ENCODE measurements at regions of chr11 and their contacts with region 1.

Region 1: DNA sequence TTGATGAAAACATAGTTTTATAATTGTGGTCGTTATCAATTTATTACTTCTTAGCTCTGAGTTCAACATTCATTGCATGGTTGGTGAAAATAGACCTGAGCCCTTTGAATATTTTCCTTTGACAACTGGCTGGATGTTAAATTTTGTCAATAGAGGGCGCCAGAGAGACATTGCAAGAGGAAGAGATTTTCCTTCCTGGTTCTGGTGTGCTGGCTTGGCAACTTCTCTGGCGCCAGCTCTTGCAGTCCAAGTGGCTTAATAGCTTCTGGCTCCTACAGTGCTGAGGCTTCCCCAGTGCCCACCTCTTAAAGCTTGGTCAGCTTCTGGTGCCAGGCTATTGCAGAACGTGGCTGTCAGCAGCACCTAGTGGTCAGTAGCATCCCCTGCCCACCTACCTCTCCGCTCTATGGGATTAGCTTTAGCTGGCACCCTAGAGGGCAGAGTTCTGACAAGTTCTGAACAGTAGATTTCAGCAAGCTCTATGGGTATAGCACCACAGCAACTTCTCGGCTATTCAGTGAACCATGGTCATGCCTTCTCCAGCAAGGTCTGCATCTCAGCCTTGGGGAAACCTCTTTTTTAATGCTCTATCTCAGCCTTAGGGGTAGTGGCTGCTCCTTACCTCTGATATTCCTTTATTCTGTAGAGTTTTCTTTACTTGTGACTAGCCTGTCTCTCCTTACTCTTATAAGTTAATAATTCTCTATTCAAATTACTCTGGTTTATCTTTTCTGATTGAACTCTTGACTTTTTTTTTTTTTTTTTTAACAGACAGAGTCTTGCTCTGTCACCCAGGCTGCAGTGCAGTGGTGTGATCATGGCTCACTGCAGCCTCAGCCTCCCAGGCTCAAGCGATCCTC is 59.4 kb downstream of the ACER3 start:
- DNase-seq: peak; percentile 60 to 87
- ATAC-seq: peak; percentile 96 to 98
- H3K4me3 ChIP-seq: no peak overlapping the region
- H3K27ac ChIP-seq: peak overlapping the region; percentile 6 to 74; a peak in 4 of 6 replicates
- H3K4me1 ChIP-seq: peaks cover 14% of the 10 kb centered on the region; the same call in 2 of the 3 replicates
- CTCF ChIP-seq: peak; percentile 99
- EP300 ChIP-seq: no peak
- POLR2A ChIP-seq: no peak
- RAD21 ChIP-seq: peak; percentile 75 to 91

Region 2: GRCh38 chr11:76729214-76729613 is 190.9 kb before region 1 on chr11:
- CTCF ChIA-PET with region 1: interaction called, 121 read pairs
- POLR2A ChIA-PET with region 1: no interaction called
- DNase-seq: no peak
- ATAC-seq: no peak
- H3K4me3 ChIP-seq: no peak overlapping the region
- H3K27ac ChIP-seq: no peak overlapping the region
- H3K4me1 ChIP-seq: peaks cover 3% of the 10 kb centered on the region
- CTCF ChIP-seq: no peak
- EP300 ChIP-seq: no peak
- POLR2A ChIP-seq: no peak
- RAD21 ChIP-seq: no peak

Region 3: GRCh38 chr11:76823481-76824078 is 96.5 kb before region 1 on chr11:
- CTCF ChIA-PET with region 1: interaction called, 14 read pairs
- POLR2A ChIA-PET with region 1: no interaction called
- DNase-seq: peak; percentile 89 to 91
- ATAC-seq: peak; percentile 95 to 97
- H3K4me3 ChIP-seq: peak overlapping the region; percentile 37
- H3K27ac ChIP-seq: peak overlapping the region; percentile 80 to 91
- H3K4me1 ChIP-seq: peaks cover 27% of the 10 kb centered on the region
- CTCF ChIP-seq: no peak
- EP300 ChIP-seq: no peak
- POLR2A ChIP-seq: no peak; the same call in 1 of the 2 replicates
- RAD21 ChIP-seq: no peak

Region 4: DNA sequence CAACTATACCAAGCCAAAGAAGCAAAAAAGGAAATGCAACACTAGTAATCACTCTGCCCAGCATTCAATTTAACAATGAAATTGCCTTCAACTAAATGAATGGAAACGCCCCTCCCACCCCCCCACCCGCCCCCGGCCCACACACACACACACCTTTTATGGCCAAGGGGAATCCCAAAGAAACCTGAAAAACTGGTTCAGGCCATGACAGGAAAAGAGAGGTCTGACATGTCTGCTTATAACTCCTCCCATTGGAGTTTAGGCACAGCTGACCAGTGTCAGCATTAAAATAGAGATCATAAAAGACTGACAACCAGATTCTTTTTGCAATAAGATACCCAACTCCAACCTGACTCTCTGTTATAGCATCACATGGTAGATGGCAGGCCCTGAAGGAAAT is 16.8 kb before region 1 on chr11:
- CTCF ChIA-PET with region 1: interaction called, 53 read pairs
- POLR2A ChIA-PET with region 1: no interaction called
- DNase-seq: no peak
- ATAC-seq: no peak
- H3K4me3 ChIP-seq: no peak overlapping the region
- H3K27ac ChIP-seq: no peak overlapping the region
- H3K4me1 ChIP-seq: no peaks in the 10 kb centered on the region
- CTCF ChIP-seq: no peak
- EP300 ChIP-seq: no peak
- POLR2A ChIP-seq: no peak
- RAD21 ChIP-seq: no peak

Region 5: DNA sequence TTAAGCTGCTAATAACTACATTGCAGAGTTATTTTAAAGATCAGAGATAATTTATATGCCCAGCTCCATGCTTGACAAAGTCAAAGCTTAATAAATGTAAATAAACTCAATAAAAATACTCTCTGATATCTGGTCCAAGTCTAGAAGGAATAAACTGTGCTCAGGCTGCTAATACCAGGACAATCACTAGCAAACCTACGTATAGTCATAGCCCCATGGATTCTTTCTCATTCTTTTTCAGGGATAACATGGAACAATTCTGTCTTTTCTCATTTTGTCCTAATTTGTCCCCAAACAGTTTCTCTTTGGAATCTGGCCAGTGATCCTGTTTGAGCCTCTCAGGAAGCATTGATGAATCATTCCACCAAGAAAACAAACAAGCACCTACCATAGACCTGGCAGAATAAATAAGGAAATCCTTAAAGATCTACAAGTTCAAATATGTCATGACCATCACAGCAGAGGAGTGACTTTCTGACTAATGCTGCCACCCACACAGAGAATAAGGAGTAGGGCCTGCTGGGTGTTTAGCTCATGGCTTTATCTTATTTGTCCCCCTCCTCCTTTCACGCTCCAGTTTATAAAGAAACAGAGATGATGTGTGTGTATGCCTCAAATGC is 100.0 kb after region 1 on chr11:
- CTCF ChIA-PET with region 1: interaction called, 14 read pairs
- POLR2A ChIA-PET with region 1: no interaction called
- DNase-seq: peak; percentile 56 to 89
- ATAC-seq: peak; percentile 93 to 97
- H3K4me3 ChIP-seq: no peak overlapping the region
- H3K27ac ChIP-seq: peak overlapping the region; percentile 68 to 77
- H3K4me1 ChIP-seq: peaks cover 58% of the 10 kb centered on the region
- CTCF ChIP-seq: no peak
- EP300 ChIP-seq: peak; percentile 68 to 70; a peak in 3 of 5 replicates
- POLR2A ChIP-seq: no peak
- RAD21 ChIP-seq: no peak

Region 6: DNA sequence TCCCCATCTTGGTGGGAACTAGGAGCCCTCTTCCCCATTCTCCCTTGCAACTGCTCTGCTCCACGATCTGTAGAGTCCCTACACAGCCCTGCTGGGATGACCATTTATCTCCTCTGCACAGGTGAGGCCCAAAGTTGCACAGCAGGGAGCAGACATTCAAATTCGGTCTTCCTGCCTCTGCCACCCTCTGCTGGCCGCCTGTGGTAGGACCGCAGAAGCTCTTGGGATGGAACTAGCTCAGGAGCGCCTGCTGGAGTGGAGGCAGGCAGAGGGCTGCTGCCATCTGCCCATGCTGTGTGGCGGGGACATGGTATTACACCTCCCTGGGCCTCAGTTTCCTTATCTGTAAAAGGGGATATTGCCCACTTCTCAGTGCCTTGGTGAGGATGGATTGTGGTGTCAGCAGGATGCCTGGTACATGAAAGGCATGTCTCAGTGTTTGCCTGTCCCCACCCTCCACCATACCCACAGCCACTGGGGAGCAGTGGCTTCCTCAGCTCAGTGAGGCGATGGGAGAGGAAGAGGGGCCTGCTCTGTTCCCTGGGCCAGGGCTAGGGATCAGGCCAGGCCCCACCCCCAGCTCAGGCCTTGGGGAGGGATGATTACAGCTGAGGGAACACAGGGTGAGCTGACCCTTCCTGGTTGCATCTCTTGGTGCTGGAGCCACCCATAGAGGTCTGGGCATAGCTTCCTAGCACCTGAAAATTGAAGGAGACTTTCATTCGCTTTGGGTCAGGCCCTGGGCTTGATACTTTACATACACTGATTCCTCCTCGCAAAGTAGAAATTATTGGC is 171.2 kb after region 1 on chr11:
- CTCF ChIA-PET with region 1: interaction called, 74 read pairs
- POLR2A ChIA-PET with region 1: interaction called, 5 read pairs
- DNase-seq: peak; percentile 85 to 90
- ATAC-seq: peak; percentile 89 to 95
- H3K4me3 ChIP-seq: no peak overlapping the region
- H3K27ac ChIP-seq: no peak overlapping the region
- H3K4me1 ChIP-seq: peaks cover 6% of the 10 kb centered on the region; the same call in 1 of the 3 replicates
- CTCF ChIP-seq: peak; percentile 95
- EP300 ChIP-seq: no peak
- POLR2A ChIP-seq: no peak
- RAD21 ChIP-seq: peak; percentile 95 to 96